Caco-2 (cell line): ENCODE measurements at regions of chr6 and their contacts with region 1.

Region 1: GRCh38 chr6:113642714-113643406 is 214.3 kb upstream of the MARCKS start:
- DNase-seq: peak; percentile 92 to 97
- H3K4me3 ChIP-seq: no peak overlapping the region
- H3K4me3 Mint-ChIP-seq: peak overlapping the region; percentile 62
- H3K27ac Mint-ChIP-seq: peak overlapping the region; percentile 86
- H3K4me1 ChIP-seq: peaks cover 62% of the 10 kb centered on the region
- H3K4me1 Mint-ChIP-seq: peaks cover 29% of the 10 kb centered on the region
- H3K27me3 ChIP-seq: no peaks in the 10 kb centered on the region
- H3K27me3 Mint-ChIP-seq: no peaks in the 10 kb centered on the region
- CTCF ChIP-seq: no peak

Region 2: DNA sequence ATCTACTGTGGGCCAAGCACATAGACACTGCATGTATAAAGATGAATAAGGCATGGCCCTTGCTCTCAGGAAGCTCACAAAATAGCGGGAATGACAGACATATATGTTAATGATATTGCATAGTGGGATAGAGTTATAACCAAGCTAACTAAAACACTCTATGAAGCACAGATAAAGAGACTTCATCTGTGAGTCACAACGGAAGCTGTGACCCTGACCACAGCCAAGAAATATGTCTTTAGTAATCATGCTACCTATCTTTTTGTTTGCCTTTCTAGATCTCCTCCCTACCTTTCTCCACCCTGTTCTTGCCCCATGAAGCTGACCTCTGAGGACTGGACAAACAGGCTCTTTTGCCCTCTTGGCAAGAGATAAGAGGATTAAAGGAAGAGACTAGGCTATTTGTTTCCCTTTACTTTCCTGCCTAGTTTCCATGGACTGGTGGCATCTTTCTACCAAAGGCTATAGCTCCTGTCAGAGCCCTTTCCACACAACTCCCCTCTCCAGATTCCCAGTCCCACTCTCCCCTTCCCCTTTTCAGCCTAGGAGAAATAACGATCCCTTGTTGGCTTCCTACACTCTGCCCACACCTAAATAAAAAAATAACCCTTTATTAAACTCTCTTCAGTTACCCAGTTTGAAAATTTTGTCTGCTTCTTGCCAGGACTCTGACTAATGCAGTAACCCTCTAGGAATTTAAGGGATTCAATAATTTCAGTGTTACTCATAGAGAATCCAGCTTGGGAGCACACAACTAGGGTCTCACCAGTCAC is 290.6 kb before region 1 on chr6:
- CTCF ChIA-PET with region 1: interaction called, 3 read pairs
- POLR2A ChIA-PET with region 1: no interaction called
- intact Hi-C with region 1: loop called (anchors 1 kb)
- DNase-seq: peak; percentile 90 to 96
- H3K4me3 ChIP-seq: no peak overlapping the region
- H3K4me3 Mint-ChIP-seq: peak overlapping the region; percentile 65
- H3K27ac Mint-ChIP-seq: peak overlapping the region; percentile 98
- H3K4me1 ChIP-seq: peaks cover 67% of the 10 kb centered on the region
- H3K4me1 Mint-ChIP-seq: peaks cover 67% of the 10 kb centered on the region
- H3K27me3 ChIP-seq: no peaks in the 10 kb centered on the region
- H3K27me3 Mint-ChIP-seq: no peaks in the 10 kb centered on the region
- CTCF ChIP-seq: no peak

Region 3: DNA sequence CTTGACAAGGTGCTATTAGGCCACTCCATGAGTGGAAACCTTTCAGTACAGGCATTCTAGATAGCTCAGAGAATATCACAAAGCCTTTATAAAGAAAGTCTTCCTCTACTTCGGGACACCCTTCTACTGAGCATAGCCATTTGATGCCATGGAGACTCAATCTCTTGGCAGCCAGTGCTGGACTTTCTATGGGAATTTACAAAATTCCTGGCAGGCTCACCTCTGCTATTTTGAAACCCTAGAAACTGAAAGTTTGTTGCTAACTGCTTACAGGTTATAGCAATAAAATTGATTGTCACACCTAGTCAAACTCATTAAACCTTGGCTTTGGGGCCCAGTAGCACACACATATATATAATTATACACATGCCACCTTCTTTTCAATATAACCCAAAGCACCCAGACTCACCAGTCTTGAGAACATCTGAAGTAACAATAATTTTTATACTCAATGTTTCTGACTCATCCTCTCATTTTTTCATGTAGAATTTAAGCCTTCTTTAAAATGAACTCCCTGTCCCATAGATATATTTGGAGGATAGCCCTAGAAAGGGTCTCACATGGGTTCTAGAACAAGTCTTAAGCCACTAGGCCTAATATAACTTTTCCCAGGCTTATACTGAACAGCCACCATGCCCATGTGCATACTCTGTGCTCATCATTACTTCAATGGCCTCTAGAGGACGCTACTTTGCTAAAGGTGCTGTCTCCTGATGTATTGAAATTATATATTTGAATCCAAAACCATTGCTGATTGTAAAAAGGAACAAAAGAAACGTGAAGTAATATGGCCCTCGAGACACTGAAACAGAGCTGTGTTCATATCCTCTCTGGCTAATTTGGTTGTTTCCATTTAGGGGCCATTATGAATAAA is 153.8 kb before region 1 on chr6:
- CTCF ChIA-PET with region 1: no interaction called
- POLR2A ChIA-PET with region 1: no interaction called
- intact Hi-C with region 1: loop called (anchors 5 kb)
- DNase-seq: no peak
- H3K4me3 ChIP-seq: no peak overlapping the region
- H3K4me3 Mint-ChIP-seq: no peak overlapping the region
- H3K27ac Mint-ChIP-seq: no peak overlapping the region
- H3K4me1 ChIP-seq: no peaks in the 10 kb centered on the region
- H3K4me1 Mint-ChIP-seq: no peaks in the 10 kb centered on the region
- H3K27me3 ChIP-seq: no peaks in the 10 kb centered on the region
- H3K27me3 Mint-ChIP-seq: no peaks in the 10 kb centered on the region
- CTCF ChIP-seq: no peak

Region 4: DNA sequence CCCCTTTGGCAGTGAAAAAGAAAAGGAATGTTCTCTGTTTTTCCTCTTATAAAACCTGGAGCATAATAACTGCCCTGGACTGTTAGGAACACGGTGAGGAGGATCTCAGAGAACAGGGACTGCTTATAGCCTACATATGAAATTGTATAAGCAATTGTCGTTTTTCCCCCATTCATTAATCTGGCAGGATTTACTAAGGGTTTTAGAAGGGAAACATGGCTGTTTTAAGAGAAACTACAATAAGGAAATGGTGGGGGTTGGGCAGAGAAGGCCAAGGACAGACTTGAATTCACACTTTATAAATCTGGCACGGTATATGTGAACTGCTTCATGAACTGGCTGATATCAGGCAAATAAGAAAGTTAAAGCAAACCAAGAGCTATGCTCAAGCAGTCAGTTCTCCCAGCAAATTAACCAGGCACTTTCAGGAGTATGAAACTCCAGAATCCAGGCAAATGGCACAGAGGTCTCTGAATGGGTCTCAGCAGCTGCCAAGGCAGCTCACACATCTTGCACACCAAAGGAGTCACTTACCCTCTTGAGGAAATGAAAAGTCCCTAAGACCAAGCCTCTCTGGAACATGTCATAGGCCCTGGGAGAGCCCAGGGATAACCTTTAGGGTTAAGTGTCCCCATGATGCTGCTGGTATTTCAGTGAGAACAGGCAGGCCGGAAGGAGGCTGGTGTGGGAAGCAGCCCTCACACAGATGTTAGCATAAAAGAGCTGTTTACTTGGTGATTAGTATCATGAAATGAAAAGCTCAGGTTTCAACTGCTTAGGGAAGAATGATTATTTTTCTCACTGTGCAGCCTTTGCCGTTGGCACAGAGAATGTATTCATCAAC is 46.3 kb before region 1 on chr6:
- CTCF ChIA-PET with region 1: no interaction called
- POLR2A ChIA-PET with region 1: no interaction called
- intact Hi-C with region 1: loop called (anchors 2 kb)
- DNase-seq: no peak
- H3K4me3 ChIP-seq: no peak overlapping the region
- H3K4me3 Mint-ChIP-seq: no peak overlapping the region
- H3K27ac Mint-ChIP-seq: no peak overlapping the region
- H3K4me1 ChIP-seq: peaks cover 11% of the 10 kb centered on the region; the same call in 1 of the 2 replicates
- H3K4me1 Mint-ChIP-seq: peaks cover 22% of the 10 kb centered on the region
- H3K27me3 ChIP-seq: no peaks in the 10 kb centered on the region
- H3K27me3 Mint-ChIP-seq: no peaks in the 10 kb centered on the region
- CTCF ChIP-seq: no peak

Region 5: DNA sequence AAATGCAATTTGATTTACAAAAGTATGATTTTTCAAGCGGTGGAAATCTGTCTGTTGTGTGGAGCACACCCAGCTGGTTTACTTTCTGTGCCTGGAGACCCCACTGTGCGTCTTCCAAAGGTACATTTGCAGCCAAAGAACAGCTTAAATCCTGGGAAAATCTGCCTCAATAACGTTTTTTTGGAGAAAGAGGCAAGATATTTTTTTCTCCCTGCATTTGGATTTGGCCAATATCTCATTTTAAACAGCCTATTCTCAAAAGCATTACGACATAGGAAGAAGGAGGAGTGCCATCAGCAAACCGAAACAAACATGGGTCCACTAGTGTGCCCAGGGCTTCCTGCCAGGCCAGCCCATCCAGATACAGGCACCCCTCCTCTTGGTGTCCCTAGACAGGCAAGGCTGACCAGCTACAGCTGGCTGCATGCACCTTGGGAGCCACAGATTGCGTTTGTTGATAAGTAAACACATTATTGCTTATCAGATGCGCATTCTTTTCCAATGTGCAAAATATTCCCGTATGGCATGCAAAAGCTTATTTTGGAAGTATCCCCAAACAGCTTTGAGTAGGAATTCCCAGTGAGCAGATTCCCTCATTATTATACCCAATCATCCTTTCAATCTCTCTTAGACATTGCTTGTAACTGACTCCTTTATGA is 29.8 kb after region 1 on chr6:
- CTCF ChIA-PET with region 1: no interaction called
- POLR2A ChIA-PET with region 1: no interaction called
- intact Hi-C with region 1: no loop called
- DNase-seq: no peak
- H3K4me3 ChIP-seq: no peak overlapping the region
- H3K4me3 Mint-ChIP-seq: no peak overlapping the region
- H3K27ac Mint-ChIP-seq: no peak overlapping the region
- H3K4me1 ChIP-seq: peaks cover 25% of the 10 kb centered on the region
- H3K4me1 Mint-ChIP-seq: peaks cover 20% of the 10 kb centered on the region
- H3K27me3 ChIP-seq: no peaks in the 10 kb centered on the region
- H3K27me3 Mint-ChIP-seq: no peaks in the 10 kb centered on the region
- CTCF ChIP-seq: no peak

Region 6: GRCh38 chr6:113690281-113691259 is 47.7 kb after region 1 on chr6:
- CTCF ChIA-PET with region 1: no interaction called
- POLR2A ChIA-PET with region 1: no interaction called
- intact Hi-C with region 1: loop called (anchors 1 kb)
- DNase-seq: no peak
- H3K4me3 ChIP-seq: no peak overlapping the region
- H3K4me3 Mint-ChIP-seq: no peak overlapping the region
- H3K27ac Mint-ChIP-seq: no peak overlapping the region
- H3K4me1 ChIP-seq: peaks cover 50% of the 10 kb centered on the region
- H3K4me1 Mint-ChIP-seq: peaks cover 44% of the 10 kb centered on the region
- H3K27me3 ChIP-seq: no peaks in the 10 kb centered on the region
- H3K27me3 Mint-ChIP-seq: no peaks in the 10 kb centered on the region
- CTCF ChIP-seq: no peak

Region 7: GRCh38 chr6:113776998-113777397 is 134.1 kb after region 1 on chr6:
- CTCF ChIA-PET with region 1: interaction called, 3 read pairs
- POLR2A ChIA-PET with region 1: interaction called, 8 read pairs
- intact Hi-C with region 1: loop called (anchors 1 kb)
- DNase-seq: peak in 1 of 2 experiments; percentile 37
- H3K4me3 ChIP-seq: no peak overlapping the region
- H3K4me3 Mint-ChIP-seq: peak overlapping the region; percentile 69
- H3K27ac Mint-ChIP-seq: peak overlapping the region; percentile 93
- H3K4me1 ChIP-seq: peaks cover 38% of the 10 kb centered on the region
- H3K4me1 Mint-ChIP-seq: peaks cover 23% of the 10 kb centered on the region
- H3K27me3 ChIP-seq: no peaks in the 10 kb centered on the region
- H3K27me3 Mint-ChIP-seq: no peaks in the 10 kb centered on the region
- CTCF ChIP-seq: no peak